ENCODE measurements at regions of chr1 and their contacts with region 1.

Region 1: DNA sequence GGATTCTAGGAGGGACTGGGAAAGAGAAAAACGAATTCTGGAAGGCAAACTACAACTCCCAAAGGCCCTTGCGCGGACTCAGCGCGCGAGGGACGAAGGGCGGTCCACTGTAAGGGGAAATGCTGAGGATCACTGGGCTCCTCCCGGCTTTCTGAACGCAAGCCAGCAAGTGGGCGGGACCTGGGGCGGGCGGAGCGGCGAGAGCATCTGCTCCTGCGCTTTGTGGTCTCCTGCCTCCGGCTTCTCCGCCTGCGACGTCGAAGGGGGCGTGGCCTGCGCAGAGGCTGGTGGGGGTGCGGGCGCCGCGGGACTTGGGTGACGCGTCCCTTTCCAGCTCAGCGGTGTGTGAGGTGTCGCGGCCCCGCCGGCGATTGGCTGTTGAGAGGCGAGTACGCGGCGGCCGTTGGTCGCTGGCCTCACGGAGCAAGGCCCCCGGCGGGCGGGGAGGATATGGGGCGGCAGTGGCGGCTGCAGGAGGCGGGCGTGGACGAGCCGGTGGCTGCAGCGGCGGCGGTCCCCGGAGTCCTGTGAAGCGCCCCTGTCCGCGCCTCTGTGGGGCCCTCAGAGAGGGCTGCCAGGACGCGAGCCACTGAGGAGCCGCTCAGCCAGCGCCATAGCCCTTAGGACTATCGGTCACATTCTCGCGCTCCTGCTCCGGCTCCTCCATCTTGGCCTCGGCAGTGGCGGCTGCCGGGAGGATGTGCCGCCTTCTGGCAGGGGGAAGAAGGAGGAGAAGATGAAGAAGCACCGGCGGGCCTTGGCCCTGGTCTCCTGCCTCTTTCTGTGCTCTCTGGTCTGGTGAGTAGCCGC is at the start of gene SUCO:
- DNase-seq: peak; percentile 100
- H3K4me3 ChIP-seq: peak within 1 kb of the TSS; percentile 80 to 83
- H3K27ac ChIP-seq: peak within 1 kb of the TSS; percentile 95 to 98
- H3K4me1 ChIP-seq: peaks cover 4 to 10% of the 10 kb centered on the region in 2 donors
- H3K27me3 ChIP-seq: no peaks in the 10 kb centered on the region
- CTCF ChIP-seq: peak in 1 of 3 experiments; percentile 5
- total RNA-seq, gene SUCO: 7.8 TPM

Region 2: GRCh38 chr1:171741872-171742576 is 790.9 kb before region 1 on chr1 and contains the start of gene VAMP4:
- intact Hi-C with region 1: loop called (anchors 2 kb)
- DNase-seq: peak; percentile 51 to 94
- H3K4me3 ChIP-seq: peak within 1 kb of the TSS; percentile 90 to 96
- H3K27ac ChIP-seq: peak within 1 kb of the TSS; percentile 95 to 97
- H3K4me1 ChIP-seq: peaks cover 9 to 41% of the 10 kb centered on the region in 2 donors
- H3K27me3 ChIP-seq: no peaks in the 10 kb centered on the region
- CTCF ChIP-seq: no peak
- total RNA-seq, gene VAMP4: 3.6 TPM

Region 3: GRCh38 chr1:171841050-171841940 is 691.6 kb before region 1 on chr1 and contains the start of gene DNM3:
- intact Hi-C with region 1: loop called (anchors 2 kb)
- DNase-seq: peak; percentile 46 to 93
- H3K4me3 ChIP-seq: peak within 1 kb of the TSS; percentile 71 to 77
- H3K27ac ChIP-seq: peak within 1 kb of the TSS; percentile 66 to 73
- H3K4me1 ChIP-seq: no peaks in the 10 kb centered on the region
- H3K27me3 ChIP-seq: no peaks in the 10 kb centered on the region
- CTCF ChIP-seq: no peak
- total RNA-seq, gene DNM3: 9.6 TPM

Region 4: DNA sequence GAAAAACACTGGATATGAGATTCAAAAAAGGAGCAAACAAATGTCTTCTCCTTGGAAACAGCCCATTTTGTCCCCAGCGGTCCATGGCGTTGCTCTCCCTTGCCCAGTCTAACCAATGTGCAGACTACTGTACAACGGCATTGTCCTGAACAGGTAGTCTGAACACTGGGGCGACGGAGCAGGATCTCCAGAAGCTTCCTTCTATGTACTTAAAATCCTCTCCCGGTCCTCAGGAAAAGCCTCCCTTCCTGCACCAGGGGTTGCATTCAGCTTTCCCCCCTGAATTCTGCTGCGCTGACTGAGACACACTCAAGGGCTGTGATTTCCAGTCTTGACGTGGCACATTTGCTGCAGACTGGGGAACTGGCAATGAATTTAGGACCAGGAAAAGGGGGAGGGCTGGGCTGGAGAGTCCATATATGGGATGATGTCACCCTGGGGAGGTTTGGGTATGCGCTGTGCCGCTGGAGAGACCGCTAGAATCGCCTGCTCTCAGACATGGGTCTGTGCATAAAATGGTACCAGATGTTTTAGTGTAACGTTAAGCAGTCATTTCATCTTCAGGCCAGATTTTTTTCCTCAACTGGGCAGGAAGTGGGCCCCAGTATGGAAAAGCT is 388.4 kb before region 1 on chr1:
- intact Hi-C with region 1: loop called (anchors 2 kb)
- DNase-seq: peak; percentile 69 to 94
- H3K4me3 ChIP-seq: peak overlapping the region; percentile 61 to 85
- H3K27ac ChIP-seq: peak overlapping the region; percentile 92 to 95
- H3K4me1 ChIP-seq: peaks cover 0 to 4% of the 10 kb centered on the region in 2 donors
- H3K27me3 ChIP-seq: no peaks in the 10 kb centered on the region
- CTCF ChIP-seq: no peak

Region 5: DNA sequence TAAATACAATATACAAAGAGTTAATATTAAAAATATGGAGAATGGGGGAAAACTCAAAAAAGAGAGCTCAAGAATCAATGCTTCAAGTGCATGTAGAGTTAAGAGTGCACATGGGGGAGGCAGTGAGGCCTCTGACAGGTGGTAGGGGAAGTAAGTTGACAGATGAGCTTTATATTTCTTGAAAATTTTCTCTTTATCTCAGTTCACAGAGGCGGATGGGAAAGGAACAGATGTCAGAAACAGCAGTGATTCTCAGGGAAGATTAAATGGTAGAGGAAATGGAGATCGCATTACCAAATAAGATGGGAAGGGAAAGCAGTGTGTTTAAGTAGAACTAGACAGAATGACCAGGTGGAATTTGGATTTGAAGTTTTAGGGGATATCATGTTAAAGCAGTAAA is 312.5 kb before region 1 on chr1:
- intact Hi-C with region 1: no loop called
- DNase-seq: no peak
- H3K4me3 ChIP-seq: no peak overlapping the region
- H3K27ac ChIP-seq: no peak overlapping the region
- H3K4me1 ChIP-seq: no peaks in the 10 kb centered on the region
- H3K27me3 ChIP-seq: no peaks in the 10 kb centered on the region
- CTCF ChIP-seq: no peak